Left lung (tissue), 14 donors: ENCODE measurements at regions of chr3 and their contacts with region 1.

Region 1: GRCh38 chr3:37967260-37967881 is 23.2 kb upstream of the VILL start:
- DNase-seq: peak in 2 of 4 donors; percentile 71 to 77
- ATAC-seq: peak; percentile 89
- H3K4me3 ChIP-seq: no peak overlapping the region
- H3K27ac ChIP-seq: no peak overlapping the region
- H3K4me1 ChIP-seq: peaks cover 1 to 22% of the 10 kb centered on the region in 2 donors
- H3K27me3 ChIP-seq: no peaks in the 10 kb centered on the region
- CTCF ChIP-seq: peak; percentile 68 to 76

Region 2: DNA sequence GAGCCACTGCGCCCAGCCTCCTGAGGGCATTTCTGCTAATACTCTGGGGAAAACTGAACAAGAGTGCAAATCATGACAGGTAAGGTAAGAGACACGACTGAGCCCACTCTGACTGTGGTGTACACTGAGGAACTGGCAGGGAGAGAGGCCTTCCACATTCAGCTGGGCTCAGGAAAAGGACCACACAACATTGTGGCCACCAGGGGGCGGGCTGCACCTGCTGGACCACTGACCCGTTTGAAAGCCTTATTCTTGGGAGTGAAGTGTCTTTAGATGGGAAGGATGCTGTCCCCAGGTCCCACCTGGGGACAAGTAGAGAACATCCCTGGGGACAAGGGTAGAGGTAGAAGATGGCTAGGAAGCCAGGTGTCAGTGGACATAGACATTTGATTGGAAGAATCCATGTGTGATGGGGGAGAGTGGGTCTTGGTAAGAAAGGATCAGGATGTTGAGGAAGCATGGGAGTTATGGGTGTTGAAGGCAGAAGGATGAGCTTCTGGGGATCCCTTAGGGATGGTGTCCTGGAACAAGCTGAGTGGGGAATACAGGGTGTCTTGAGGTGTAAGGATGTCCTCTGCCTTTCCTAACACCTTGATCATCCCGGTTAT is 111.9 kb before region 1 on chr3:
- intact Hi-C with region 1: loop called (anchors 5 to 10 kb)
- DNase-seq: peak; percentile 71 to 95 (median 84)
- ATAC-seq: peak; percentile 76
- H3K4me3 ChIP-seq: no peak overlapping the region
- H3K27ac ChIP-seq: no peak overlapping the region
- H3K4me1 ChIP-seq: peaks cover 6 to 10% of the 10 kb centered on the region in 2 donors
- H3K27me3 ChIP-seq: no peaks in the 10 kb centered on the region
- CTCF ChIP-seq: peak; percentile 93 to 96

Region 3: GRCh38 chr3:38017442-38018295 is 50.3 kb after region 1 on chr3:
- intact Hi-C with region 1: no loop called
- DNase-seq: peak in 2 of 4 donors; percentile 24 to 35
- ATAC-seq: no peak
- H3K4me3 ChIP-seq: no peak overlapping the region
- H3K27ac ChIP-seq: no peak overlapping the region
- H3K4me1 ChIP-seq: peaks cover 0 to 4% of the 10 kb centered on the region in 2 donors
- H3K27me3 ChIP-seq: no peaks in the 10 kb centered on the region
- CTCF ChIP-seq: no peak